ENCODE measurements at regions of chr19 and their contacts with region 1.

Region 1: DNA sequence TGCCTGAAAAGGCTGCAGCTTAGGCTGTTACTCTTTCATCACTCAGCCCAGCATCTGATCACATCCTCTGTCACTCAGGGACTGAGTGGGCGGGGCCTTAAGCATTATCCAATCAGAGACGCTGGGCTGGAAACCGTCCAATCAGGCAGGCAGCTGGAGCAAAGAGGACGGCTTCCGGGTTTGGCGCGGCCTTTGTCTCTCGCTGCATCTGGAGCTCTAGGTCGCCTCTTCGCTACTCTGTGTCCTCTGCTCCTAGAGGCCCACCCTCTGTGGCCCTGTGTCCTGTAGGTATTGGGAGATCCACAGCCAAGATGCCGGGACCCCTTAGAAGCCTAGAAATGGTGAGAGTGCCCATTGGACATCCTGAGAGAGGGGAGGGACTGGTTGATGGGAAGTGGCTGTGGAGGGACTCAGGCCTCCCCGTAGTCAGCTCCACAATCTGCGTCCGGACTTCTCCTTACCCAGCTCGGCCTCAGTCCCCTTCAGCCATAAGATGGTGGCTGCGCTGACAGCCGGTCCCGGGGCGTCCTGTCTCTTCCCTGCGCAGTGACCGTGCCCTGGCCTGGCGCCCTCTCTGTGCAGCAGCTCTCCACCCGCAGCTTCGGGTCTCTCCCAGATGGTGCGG is at the start of gene ZNF486:
- DNase-seq: peak; percentile 95
- H3K4me3 ChIP-seq: peak within 1 kb of the TSS; percentile 76 to 86 (median 77)
- H3K27ac ChIP-seq: peak within 1 kb of the TSS; percentile 94
- H3K4me1 ChIP-seq: no peaks in the 10 kb centered on the region
- H3K27me3 ChIP-seq: no peaks in the 10 kb centered on the region
- CTCF ChIP-seq: no peak
- POLR2A ChIP-seq: peak; percentile 31
- total RNA-seq, gene ZNF486: 5.4 and 8.4 TPM in 2 replicates

Region 2: DNA sequence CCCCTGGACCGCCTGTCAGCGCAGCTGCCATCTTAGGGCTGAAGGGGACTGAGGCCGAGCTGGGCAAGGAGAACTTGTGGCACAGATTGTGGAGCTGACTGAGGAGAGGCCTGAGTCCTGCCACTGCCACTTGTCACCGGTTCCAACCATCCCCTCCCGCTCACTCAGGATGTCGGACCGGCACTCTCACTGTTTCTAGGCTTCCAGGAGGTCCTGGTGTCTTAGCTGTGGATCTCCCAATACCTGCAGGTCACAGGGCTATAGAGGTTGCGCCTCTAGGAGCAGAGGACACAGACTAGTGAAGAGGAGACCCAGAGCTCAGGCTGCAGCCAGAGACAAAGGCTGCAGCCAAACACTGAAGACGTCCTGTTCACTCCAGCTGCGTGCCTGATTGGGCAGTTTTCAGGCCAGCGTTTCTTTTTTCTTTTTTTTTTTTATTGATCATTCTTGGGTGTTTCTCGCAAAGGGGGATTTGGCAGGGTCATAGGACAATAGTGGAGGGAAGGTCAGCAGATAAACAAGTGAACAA is 15.5 kb before region 1 on chr19:
- CTCF ChIA-PET with region 1: no interaction called
- POLR2A ChIA-PET with region 1: no interaction called
- dilution Hi-C with region 1: no loop called
- intact Hi-C with region 1: no loop called
- DNase-seq: no peak
- H3K4me3 ChIP-seq: no peak overlapping the region
- H3K27ac ChIP-seq: no peak overlapping the region
- H3K4me1 ChIP-seq: no peaks in the 10 kb centered on the region
- H3K27me3 ChIP-seq: no peaks in the 10 kb centered on the region
- CTCF ChIP-seq: no peak
- POLR2A ChIP-seq: no peak

Region 3: DNA sequence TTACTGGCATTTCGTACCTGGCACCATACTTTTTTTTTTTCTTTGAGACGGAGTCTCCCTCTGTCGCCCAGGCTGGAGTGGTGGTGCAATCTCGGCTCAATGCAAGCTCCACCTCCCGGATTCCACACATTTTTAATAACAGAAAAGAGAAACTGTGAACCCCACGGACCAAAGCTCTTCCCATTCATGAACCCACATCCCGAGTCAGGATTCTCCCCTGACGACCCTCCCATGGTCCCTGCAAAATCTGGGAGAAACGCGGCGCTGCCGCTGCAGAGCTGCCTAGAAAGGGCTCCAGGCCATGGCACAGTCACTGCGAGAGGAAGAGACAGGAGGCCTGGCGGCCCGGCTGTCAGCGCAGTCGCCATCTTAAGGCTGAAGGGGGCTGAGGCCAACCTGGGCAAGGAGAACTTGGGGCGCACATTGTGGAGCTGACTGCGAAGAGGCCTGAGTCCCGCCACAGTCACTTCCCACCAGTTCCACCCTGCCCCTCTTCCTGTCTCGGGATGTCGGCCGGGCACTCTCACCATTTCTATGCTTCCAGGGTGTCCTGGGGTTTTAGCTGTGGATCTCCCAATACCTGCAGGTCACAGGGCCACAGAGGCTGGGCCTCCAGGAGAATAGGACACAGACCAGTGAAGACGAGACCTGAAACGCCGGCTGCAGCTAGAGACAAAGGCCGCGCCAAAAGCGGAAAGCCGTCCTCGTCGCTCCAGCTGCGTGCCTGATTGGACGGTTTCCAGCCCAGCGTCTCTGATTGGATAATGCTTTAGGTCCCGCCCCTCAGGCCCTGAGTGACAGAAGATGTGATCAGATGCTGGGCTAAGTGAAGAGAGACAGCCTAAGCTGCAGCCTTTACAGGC is 70.9 kb after region 1 on chr19:
- CTCF ChIA-PET with region 1: interaction called, 9 read pairs
- POLR2A ChIA-PET with region 1: interaction called, 3 read pairs
- dilution Hi-C with region 1: no loop called
- intact Hi-C with region 1: loop called (anchors 1 kb)
- DNase-seq: peak; percentile 88
- H3K4me3 ChIP-seq: peak overlapping the region; percentile 56 to 76 (median 76)
- H3K27ac ChIP-seq: peak overlapping the region; percentile 56
- H3K4me1 ChIP-seq: no peaks in the 10 kb centered on the region
- H3K27me3 ChIP-seq: no peaks in the 10 kb centered on the region
- CTCF ChIP-seq: no peak
- POLR2A ChIP-seq: no peak

Measured in endothelial cell of umbilical vein (primary cell).